ENCODE measurements at regions of chr7 and their contacts with region 1.

Region 1: DNA sequence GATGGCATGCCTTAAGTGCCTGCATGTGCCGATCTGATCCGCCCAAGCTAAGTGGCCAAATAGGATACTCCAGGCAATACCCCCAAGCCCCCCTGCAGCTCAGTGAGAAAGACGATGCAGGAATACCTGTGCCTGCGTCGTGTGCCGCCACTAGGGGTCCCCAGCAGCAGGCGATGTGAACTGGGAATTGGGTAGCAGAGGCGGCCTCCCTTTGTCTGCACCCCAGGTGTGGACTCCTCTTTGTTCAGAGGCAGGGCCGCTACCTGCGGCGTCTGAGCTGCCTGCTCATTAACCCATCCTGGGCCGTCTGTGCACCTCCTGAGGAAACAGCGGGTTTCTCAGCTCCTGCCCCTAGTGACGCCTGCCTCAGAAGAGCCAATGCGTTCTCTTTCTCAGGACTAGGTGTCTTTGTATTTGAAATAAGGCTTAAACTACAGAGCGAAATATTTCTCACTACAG is 4.8 kb upstream of the CHN2 start:
- DNase-seq: peak; percentile 9 to 72 (median 34)
- ATAC-seq: peak; percentile 75
- H3K4me3 ChIP-seq: no peak overlapping the region
- H3K4me3 Mint-ChIP-seq: no peak overlapping the region
- H3K27ac ChIP-seq: no peak overlapping the region
- H3K27ac Mint-ChIP-seq: no peak overlapping the region
- H3K4me1 ChIP-seq: peaks cover 2% of the 10 kb centered on the region
- H3K4me1 Mint-ChIP-seq: no peaks in the 10 kb centered on the region
- H3K27me3 ChIP-seq: peaks cover 0 to 16% of the 10 kb centered on the region in 2 experiments
- H3K27me3 Mint-ChIP-seq: peaks cover 24% of the 10 kb centered on the region
- CTCF ChIP-seq: peak; percentile 69

Region 2: DNA sequence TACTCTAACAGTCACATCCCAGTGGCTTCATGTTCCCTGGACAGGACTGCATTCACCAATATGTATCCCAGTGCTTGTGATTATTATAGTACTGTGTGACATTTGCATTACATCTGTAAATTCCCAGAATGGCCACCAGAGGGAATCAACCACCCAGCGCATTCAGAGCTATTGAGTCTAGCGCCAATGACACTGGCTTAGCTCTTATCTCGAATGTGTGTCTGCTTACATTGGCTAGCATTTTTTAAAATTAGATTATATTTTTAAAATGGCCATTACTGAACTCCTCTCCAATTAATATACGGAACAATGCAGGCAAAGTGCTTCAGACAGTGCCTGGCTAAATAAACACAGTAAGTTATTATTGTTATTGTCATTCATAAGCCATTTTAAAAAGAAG is 267.9 kb before region 1 on chr7:
- CTCF ChIA-PET with region 1: no interaction called
- POLR2A ChIA-PET with region 1: no interaction called
- intact Hi-C with region 1: loop called (anchors 5 kb)
- DNase-seq: peak in 7 of 14 experiments; percentile 4 to 68 (median 39)
- ATAC-seq: peak; percentile 89
- H3K4me3 ChIP-seq: no peak overlapping the region
- H3K4me3 Mint-ChIP-seq: no peak overlapping the region
- H3K27ac ChIP-seq: no peak overlapping the region
- H3K27ac Mint-ChIP-seq: no peak overlapping the region
- H3K4me1 ChIP-seq: no peaks in the 10 kb centered on the region
- H3K4me1 Mint-ChIP-seq: peaks cover 14% of the 10 kb centered on the region
- H3K27me3 ChIP-seq: no peaks in the 10 kb centered on the region
- H3K27me3 Mint-ChIP-seq: no peaks in the 10 kb centered on the region
- CTCF ChIP-seq: peak; percentile 79

Region 3: GRCh38 chr7:28926871-28927597 is 262.7 kb before region 1 on chr7:
- CTCF ChIA-PET with region 1: no interaction called
- POLR2A ChIA-PET with region 1: no interaction called
- intact Hi-C with region 1: loop called (anchors 5 kb)
- DNase-seq: peak; percentile 3 to 79 (median 26)
- ATAC-seq: peak; percentile 91
- H3K4me3 ChIP-seq: peak overlapping the region; percentile 58
- H3K4me3 Mint-ChIP-seq: peak overlapping the region; percentile 91
- H3K27ac ChIP-seq: no peak overlapping the region
- H3K27ac Mint-ChIP-seq: no peak overlapping the region
- H3K4me1 ChIP-seq: peaks cover 7% of the 10 kb centered on the region
- H3K4me1 Mint-ChIP-seq: peaks cover 20% of the 10 kb centered on the region
- H3K27me3 ChIP-seq: no peaks in the 10 kb centered on the region
- H3K27me3 Mint-ChIP-seq: peaks cover 16% of the 10 kb centered on the region
- CTCF ChIP-seq: peak; percentile 78

Region 4: GRCh38 chr7:29337546-29338116 is 147.9 kb after region 1 on chr7:
- CTCF ChIA-PET with region 1: no interaction called
- POLR2A ChIA-PET with region 1: no interaction called
- intact Hi-C with region 1: loop called in 1 of 2 experiments (anchors 10 kb)
- DNase-seq: peak in 9 of 14 experiments; percentile 1 to 76 (median 27)
- ATAC-seq: peak; percentile 93
- H3K4me3 ChIP-seq: no peak overlapping the region
- H3K4me3 Mint-ChIP-seq: peak overlapping the region; percentile 5
- H3K27ac ChIP-seq: peak overlapping the region in 1 of 2 donors; percentile 37
- H3K27ac Mint-ChIP-seq: peak overlapping the region; percentile 73
- H3K4me1 ChIP-seq: peaks cover 12% of the 10 kb centered on the region
- H3K4me1 Mint-ChIP-seq: peaks cover 36% of the 10 kb centered on the region
- H3K27me3 ChIP-seq: no peaks in the 10 kb centered on the region
- H3K27me3 Mint-ChIP-seq: no peaks in the 10 kb centered on the region
- CTCF ChIP-seq: no peak

Region 5: DNA sequence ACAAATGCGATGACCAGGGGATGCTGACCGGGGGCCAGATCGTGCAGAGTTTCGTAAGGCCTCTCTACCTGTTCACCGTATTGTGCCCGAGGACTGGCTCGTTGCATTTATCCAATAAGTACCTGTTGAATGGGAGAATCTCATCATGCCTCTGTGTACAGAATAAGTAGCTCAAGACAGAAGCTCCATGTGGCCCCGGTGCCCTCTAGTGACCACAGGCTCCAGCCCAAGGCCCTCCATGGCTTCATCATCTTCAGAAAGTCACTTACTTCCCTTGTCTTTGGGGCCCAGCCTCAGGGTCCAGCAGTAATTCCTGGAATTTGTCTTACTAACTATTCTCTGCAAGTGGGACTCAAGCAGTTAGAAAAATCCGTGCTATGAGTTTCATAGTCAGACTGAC is 155.8 kb after region 1 on chr7:
- CTCF ChIA-PET with region 1: no interaction called
- POLR2A ChIA-PET with region 1: no interaction called
- intact Hi-C with region 1: loop called in 1 of 2 experiments (anchors 5 kb)
- DNase-seq: peak in 3 of 14 experiments; percentile 15 to 28 (median 25)
- ATAC-seq: no peak
- H3K4me3 ChIP-seq: no peak overlapping the region
- H3K4me3 Mint-ChIP-seq: no peak overlapping the region
- H3K27ac ChIP-seq: no peak overlapping the region
- H3K27ac Mint-ChIP-seq: no peak overlapping the region
- H3K4me1 ChIP-seq: peaks cover 6% of the 10 kb centered on the region
- H3K4me1 Mint-ChIP-seq: no peaks in the 10 kb centered on the region
- H3K27me3 ChIP-seq: no peaks in the 10 kb centered on the region
- H3K27me3 Mint-ChIP-seq: no peaks in the 10 kb centered on the region
- CTCF ChIP-seq: no peak

Region 6: GRCh38 chr7:29408841-29409243 is 219.1 kb after region 1 on chr7:
- CTCF ChIA-PET with region 1: interaction called, 20 read pairs
- POLR2A ChIA-PET with region 1: interaction called, 6 read pairs
- intact Hi-C with region 1: loop called (anchors 1 kb)
- DNase-seq: peak in 12 of 14 experiments; percentile 3 to 76 (median 31)
- ATAC-seq: no peak
- H3K4me3 ChIP-seq: no peak overlapping the region
- H3K4me3 Mint-ChIP-seq: no peak overlapping the region
- H3K27ac ChIP-seq: no peak overlapping the region
- H3K27ac Mint-ChIP-seq: no peak overlapping the region
- H3K4me1 ChIP-seq: no peaks in the 10 kb centered on the region
- H3K4me1 Mint-ChIP-seq: no peaks in the 10 kb centered on the region
- H3K27me3 ChIP-seq: no peaks in the 10 kb centered on the region
- H3K27me3 Mint-ChIP-seq: peaks cover 4% of the 10 kb centered on the region
- CTCF ChIP-seq: peak; percentile 89